Ascending aorta (tissue), 2 donors: ENCODE measurements at regions of chr6 and their contacts with region 1.

Region 1: GRCh38 chr6:39302669-39303424 is 11.4 kb downstream of the KCNK17 start:
- DNase-seq: peak in 1 of 2 donors; percentile 89
- H3K4me3 ChIP-seq: peak overlapping the region in 1 of 2 donors; percentile 24
- H3K27ac ChIP-seq: no peak overlapping the region
- H3K4me1 ChIP-seq: no peaks in the 10 kb centered on the region
- H3K27me3 ChIP-seq: no peaks in the 10 kb centered on the region
- CTCF ChIP-seq: peak; percentile 78 to 85 (median 83)

Region 2: GRCh38 chr6:38871741-38872568 is 430.9 kb before region 1 on chr6:
- intact Hi-C with region 1: loop called (anchors 10 kb)
- DNase-seq: no peak
- H3K4me3 ChIP-seq: no peak overlapping the region
- H3K27ac ChIP-seq: no peak overlapping the region
- H3K4me1 ChIP-seq: no peaks in the 10 kb centered on the region
- H3K27me3 ChIP-seq: no peaks in the 10 kb centered on the region
- CTCF ChIP-seq: peak; percentile 8 to 58 (median 34)

Region 3: GRCh38 chr6:38973178-38974054 is 329.4 kb before region 1 on chr6:
- intact Hi-C with region 1: loop called (anchors 10 kb)
- DNase-seq: no peak
- H3K4me3 ChIP-seq: no peak overlapping the region
- H3K27ac ChIP-seq: no peak overlapping the region
- H3K4me1 ChIP-seq: no peaks in the 10 kb centered on the region
- H3K27me3 ChIP-seq: no peaks in the 10 kb centered on the region
- CTCF ChIP-seq: peak in 2 of 3 experiments; percentile 22 to 27

Region 4: DNA sequence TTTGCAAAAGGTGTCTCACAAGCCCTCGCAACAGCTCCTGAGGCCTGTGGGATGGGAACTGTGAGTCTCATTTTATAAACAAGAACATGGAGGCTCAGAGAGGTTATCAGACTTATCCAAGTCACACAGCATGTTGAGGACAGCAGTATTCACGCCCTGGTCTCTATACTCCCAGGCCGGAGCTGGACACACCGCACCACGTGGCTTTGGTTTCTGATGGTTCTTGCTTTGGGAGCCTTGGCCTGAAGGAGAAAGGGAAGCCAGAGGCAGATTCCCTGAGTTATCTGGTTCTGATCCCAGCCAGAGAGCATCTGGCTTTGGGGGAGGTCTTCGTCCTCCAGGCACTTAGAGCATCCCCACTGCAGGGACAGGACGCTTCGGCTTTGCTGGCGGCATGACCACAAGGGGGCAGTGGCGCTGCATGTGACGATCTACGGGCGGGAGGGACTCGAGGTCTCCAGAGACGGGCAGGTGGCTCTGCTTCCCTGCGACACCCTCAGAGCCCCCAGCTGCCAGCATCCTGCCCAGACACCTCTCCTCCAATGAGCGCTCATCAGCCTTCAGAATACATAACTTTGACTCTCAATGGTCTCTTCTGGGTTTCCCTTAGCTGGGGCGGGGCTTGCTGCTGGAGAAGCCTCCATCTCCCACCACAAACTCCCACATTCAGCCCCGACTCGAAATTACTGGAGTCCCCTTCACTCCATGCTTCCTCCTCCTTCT is 136.5 kb before region 1 on chr6:
- intact Hi-C with region 1: loop called (anchors 1 kb)
- DNase-seq: peak in 1 of 2 donors; percentile 74
- H3K4me3 ChIP-seq: no peak overlapping the region
- H3K27ac ChIP-seq: no peak overlapping the region
- H3K4me1 ChIP-seq: no peaks in the 10 kb centered on the region
- H3K27me3 ChIP-seq: no peaks in the 10 kb centered on the region
- CTCF ChIP-seq: peak; percentile 68 to 88 (median 74)